ENCODE measurements at regions of chr2 and their contacts with region 1.

Region 1: GRCh38 chr2:10412384-10412783 is 35.7 kb downstream of the ODC1 start:
- DNase-seq: peak in 4 of 42 donors; percentile 25 to 47 (median 38)

Region 2: DNA sequence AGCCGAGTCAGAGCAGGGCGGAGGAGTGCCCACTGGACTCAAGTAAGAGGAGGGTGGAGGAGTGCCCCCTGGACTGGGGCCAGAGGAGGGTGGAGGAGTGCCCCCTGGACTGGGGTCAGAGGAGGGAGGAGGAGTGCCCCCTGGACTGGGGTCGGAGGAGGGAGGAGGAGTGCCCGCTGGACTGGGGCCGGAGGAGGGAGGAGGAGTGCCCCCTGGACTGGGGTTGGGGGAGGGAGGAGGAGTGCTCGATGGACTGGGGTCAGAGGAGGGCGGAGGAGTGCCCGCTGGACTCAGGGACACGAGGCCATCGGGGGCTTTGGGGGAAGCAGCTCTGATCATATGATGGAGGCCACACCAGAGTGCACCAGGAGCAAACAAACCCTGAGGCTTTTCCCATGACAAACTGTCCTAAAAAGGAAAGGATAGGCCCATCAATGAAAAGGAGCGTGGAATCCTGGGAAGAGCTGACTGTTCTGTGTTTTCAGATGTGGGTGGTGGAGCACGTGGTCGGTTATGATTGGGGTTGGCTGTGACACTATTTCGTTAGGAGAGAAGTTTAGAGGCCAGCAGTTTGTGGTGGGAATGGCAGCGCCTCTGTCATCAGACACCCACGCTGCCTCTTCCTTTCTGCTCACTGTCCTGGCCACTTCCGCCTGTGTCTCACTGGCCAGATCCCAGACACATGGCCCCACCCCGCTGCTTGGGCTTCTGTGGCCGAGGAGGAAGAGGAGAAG is 134.2 kb before region 1 on chr2:
- intact Hi-C with region 1: loop called (anchors 10 kb)
- DNase-seq: peak in 41 of 42 donors; percentile 20 to 77 (median 53)

Region 3: GRCh38 chr2:10307561-10308156 is 104.7 kb before region 1 on chr2:
- intact Hi-C with region 1: no loop called
- DNase-seq: peak in 1 of 42 donors; percentile 34

Region 4: GRCh38 chr2:10448208-10448645 is 35.8 kb after region 1 on chr2 and contains the start of gene ODC1:
- intact Hi-C with region 1: loop called (anchors 2 kb)
- DNase-seq: peak; percentile 84 to 98 (median 92)

Measured in head of caudate nucleus (tissue), 42 donors.